Thyroid gland (tissue), 4 donors: ENCODE measurements at regions of chr19 and their contacts with region 1.

Region 1: DNA sequence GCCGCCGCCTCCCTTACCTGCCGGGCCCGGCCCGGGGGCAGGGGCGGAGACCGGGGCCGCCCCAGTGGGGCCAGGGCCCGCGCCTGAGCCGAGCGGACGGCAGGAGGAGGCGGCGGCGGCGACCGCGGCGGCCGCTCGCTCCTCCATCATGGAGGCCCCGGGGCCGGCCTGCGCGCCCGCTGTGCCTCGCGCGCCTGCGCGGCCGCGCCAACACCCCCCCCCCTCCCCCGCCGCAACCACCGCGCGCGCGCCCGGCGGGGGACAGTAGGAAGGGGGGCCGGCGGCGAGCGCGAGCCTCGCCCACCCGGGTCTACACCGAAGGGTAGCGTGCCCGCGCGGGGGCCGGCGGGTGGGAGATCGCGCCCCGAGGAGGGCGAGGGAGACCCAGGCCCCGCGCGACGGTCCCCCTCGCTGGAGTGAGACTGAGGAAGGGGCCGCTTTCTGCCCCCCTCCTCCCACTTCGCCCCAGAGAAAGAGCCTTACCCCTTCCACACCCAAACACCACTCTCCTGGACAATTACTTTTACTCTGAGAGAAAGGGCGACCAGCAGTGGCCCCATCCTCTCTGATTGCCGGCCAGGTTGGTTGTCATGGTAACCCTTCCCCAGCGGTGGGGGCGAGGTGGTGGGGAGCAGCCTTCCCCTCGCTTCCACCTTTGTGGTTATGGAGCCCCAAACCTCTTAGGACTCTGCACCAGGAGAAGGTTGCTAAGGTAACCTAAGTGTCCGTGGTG is at the start of gene STRN4:
- DNase-seq: peak; percentile 43 to 44
- H3K4me3 ChIP-seq: peak within 1 kb of the TSS; percentile 62 to 99 (median 66)
- H3K27ac ChIP-seq: peak within 1 kb of the TSS; percentile 71 to 90 (median 85)
- H3K4me1 ChIP-seq: peaks cover 9 to 35% of the 10 kb centered on the region in 2 donors
- H3K27me3 ChIP-seq: no peaks in the 10 kb centered on the region
- CTCF ChIP-seq: no peak
- POLR2A ChIP-seq: peak; percentile 44 to 66
- total RNA-seq, gene STRN4: 54.1 to 73.4 (median 67.7) TPM

Region 2: GRCh38 chr19:46713781-46714443 is 32.5 kb before region 1 on chr19:
- intact Hi-C with region 1: loop called (anchors 5 kb)
- DNase-seq: peak; percentile 98 to 99
- H3K4me3 ChIP-seq: peak overlapping the region; percentile 40 to 65 (median 41)
- H3K27ac ChIP-seq: peak overlapping the region; percentile 70 to 98 (median 96)
- H3K4me1 ChIP-seq: peaks cover 23 to 28% of the 10 kb centered on the region in 2 donors
- H3K27me3 ChIP-seq: no peaks in the 10 kb centered on the region
- CTCF ChIP-seq: no peak
- POLR2A ChIP-seq: peak in 1 of 2 donors; percentile 5